WTC11 (cell line): ENCODE measurements at regions of chr7 and their contacts with region 1.

Region 1: GRCh38 chr7:90455163-90456030 is 14.0 kb upstream of the PTTG1IP2 start:
- DNase-seq: no peak
- ATAC-seq: peak; percentile 91
- H3K4me3 Mint-ChIP-seq: peak overlapping the region; percentile 61
- H3K27ac Mint-ChIP-seq: no peak overlapping the region
- H3K4me1 Mint-ChIP-seq: peaks cover 10% of the 10 kb centered on the region
- H3K27me3 Mint-ChIP-seq: no peaks in the 10 kb centered on the region
- CTCF ChIP-seq: peak; percentile 50; the same call in 1 of the 2 replicates

Region 2: GRCh38 chr7:90320801-90321494 is 134.4 kb before region 1 on chr7 and contains the start of gene FAM237B:
- CTCF ChIA-PET with region 1: no interaction called
- POLR2A ChIA-PET with region 1: no interaction called
- DNase-seq: peak; percentile 39
- ATAC-seq: peak; percentile 87
- H3K4me3 Mint-ChIP-seq: peak within 1 kb of the TSS; percentile 69
- H3K27ac Mint-ChIP-seq: no peak within 1 kb of the TSS
- H3K4me1 Mint-ChIP-seq: 0 out of 2 replicates have a peak, but pooled peaks cover 12% of the 10 kb centered on the region
- H3K27me3 Mint-ChIP-seq: peaks cover 61% of the 10 kb centered on the region
- CTCF ChIP-seq: no peak
- total RNA-seq, gene FAM237B: not detected in 3 replicates

Region 3: DNA sequence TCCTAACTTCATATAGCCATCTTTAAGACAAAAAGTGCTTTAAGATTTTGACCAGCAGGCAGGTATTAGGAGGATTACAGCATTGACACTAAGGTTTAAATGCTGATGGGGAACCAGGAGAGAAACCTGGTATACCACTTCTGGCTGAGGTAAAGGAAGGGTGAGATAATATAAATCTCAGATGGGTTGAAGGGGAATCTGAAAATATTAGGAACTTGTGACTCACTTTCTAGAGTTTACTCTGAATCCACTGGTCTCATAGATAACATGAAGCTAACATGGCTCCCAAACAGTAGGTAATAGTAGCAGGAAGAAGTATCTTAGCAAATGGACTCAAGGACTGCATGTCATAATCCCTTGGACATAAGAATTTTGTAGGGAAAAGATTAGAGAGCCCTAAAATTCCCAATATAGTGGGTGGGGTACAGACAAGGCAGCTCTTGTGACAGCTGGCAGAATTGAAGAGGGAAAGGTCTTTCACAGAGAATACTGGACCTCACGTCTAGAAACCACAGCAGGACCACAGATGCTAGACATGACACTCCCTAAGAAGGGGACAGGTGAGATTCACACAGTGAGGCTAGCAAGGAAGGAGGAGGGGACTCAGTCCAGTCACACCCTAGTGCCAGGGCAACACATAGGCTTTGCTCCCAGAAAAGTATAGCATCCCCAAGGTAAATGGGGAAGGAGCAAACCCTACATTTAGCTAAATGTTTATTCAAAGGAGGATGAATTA is 17.6 kb after region 1 on chr7:
- CTCF ChIA-PET with region 1: interaction called, 13 read pairs
- POLR2A ChIA-PET with region 1: no interaction called
- DNase-seq: no peak
- ATAC-seq: no peak
- H3K4me3 Mint-ChIP-seq: no peak overlapping the region
- H3K27ac Mint-ChIP-seq: no peak overlapping the region
- H3K4me1 Mint-ChIP-seq: no peaks in the 10 kb centered on the region
- H3K27me3 Mint-ChIP-seq: no peaks in the 10 kb centered on the region
- CTCF ChIP-seq: no peak

Region 4: GRCh38 chr7:90536449-90536848 is 81.1 kb after region 1 on chr7:
- CTCF ChIA-PET with region 1: interaction called, 17 read pairs
- POLR2A ChIA-PET with region 1: no interaction called
- DNase-seq: no peak
- ATAC-seq: no peak
- H3K4me3 Mint-ChIP-seq: no peak overlapping the region
- H3K27ac Mint-ChIP-seq: no peak overlapping the region
- H3K4me1 Mint-ChIP-seq: peaks cover 40% of the 10 kb centered on the region
- H3K27me3 Mint-ChIP-seq: no peaks in the 10 kb centered on the region
- CTCF ChIP-seq: no peak

Region 5: GRCh38 chr7:90595801-90596671 is 140.6 kb after region 1 on chr7 and contains the start of gene CDK14:
- CTCF ChIA-PET with region 1: interaction called, 18 read pairs
- POLR2A ChIA-PET with region 1: no interaction called
- DNase-seq: peak; percentile 87
- ATAC-seq: peak; percentile 51
- H3K4me3 Mint-ChIP-seq: peak within 1 kb of the TSS; percentile 91
- H3K27ac Mint-ChIP-seq: peak within 1 kb of the TSS; percentile 98
- H3K4me1 Mint-ChIP-seq: peaks cover 60% of the 10 kb centered on the region
- H3K27me3 Mint-ChIP-seq: peaks cover 3% of the 10 kb centered on the region
- CTCF ChIP-seq: peak; percentile 41
- total RNA-seq, gene CDK14: 35.0 to 57.9 TPM (median 38.3 TPM) in 3 replicates

Region 6: DNA sequence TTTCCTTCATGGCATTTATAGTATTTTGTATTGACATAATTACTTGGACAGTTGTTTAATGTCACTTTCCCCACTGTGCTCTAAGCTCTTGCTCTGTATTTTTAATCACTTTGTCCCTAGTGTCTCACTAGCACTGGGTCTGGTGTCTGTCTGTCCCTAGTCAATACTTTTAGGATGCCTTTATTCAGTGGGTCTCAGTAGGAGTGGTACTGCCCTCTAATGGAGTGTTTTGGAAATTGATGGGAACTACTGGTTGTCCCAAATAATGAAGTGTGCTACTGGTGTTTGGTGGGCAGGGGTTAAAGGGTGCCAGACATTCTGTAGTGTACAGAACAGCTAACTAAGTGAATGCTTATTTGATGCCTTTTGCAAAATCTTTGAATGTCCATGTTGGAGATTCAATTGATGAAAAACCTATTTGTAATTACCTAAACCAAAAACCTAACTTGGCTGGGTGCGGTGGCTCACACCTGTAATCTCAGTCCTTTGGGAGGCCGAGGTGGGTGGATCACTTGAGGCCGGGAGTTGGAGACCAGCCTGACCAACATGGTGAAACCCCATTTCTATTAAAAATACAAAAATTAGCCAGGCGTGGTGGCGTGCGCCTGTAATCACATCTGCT is 174.0 kb after region 1 on chr7:
- CTCF ChIA-PET with region 1: interaction called, 23 read pairs
- POLR2A ChIA-PET with region 1: no interaction called
- DNase-seq: no peak
- ATAC-seq: peak; percentile 85
- H3K4me3 Mint-ChIP-seq: no peak overlapping the region
- H3K27ac Mint-ChIP-seq: no peak overlapping the region; the same call in 1 of the 2 replicates
- H3K4me1 Mint-ChIP-seq: peaks cover 43% of the 10 kb centered on the region
- H3K27me3 Mint-ChIP-seq: no peaks in the 10 kb centered on the region
- CTCF ChIP-seq: peak; percentile 43

Region 7: GRCh38 chr7:91034459-91035368 is 579.3 kb after region 1 on chr7:
- CTCF ChIA-PET with region 1: interaction called, 35 read pairs
- POLR2A ChIA-PET with region 1: no interaction called
- DNase-seq: peak; percentile 61
- ATAC-seq: peak; percentile 24; the same call in 1 of the 2 replicates
- H3K4me3 Mint-ChIP-seq: no peak overlapping the region
- H3K27ac Mint-ChIP-seq: no peak overlapping the region
- H3K4me1 Mint-ChIP-seq: peaks cover 68% of the 10 kb centered on the region
- H3K27me3 Mint-ChIP-seq: no peaks in the 10 kb centered on the region
- CTCF ChIP-seq: peak; percentile 74